BJ (cell line): ENCODE measurements at regions of chr11 and their contacts with region 1.

Region 1: GRCh38 chr11:94623120-94623735 is 56.1 kb downstream of the PIWIL4 start:
- DNase-seq: peak; percentile 23
- H3K4me3 ChIP-seq: no peak overlapping the region
- H3K27me3 ChIP-seq: no peaks in the 10 kb centered on the region
- CTCF ChIP-seq: peak; percentile 86

Region 2: GRCh38 chr11:94100253-94100652 is 523.0 kb before region 1 on chr11:
- CTCF ChIA-PET with region 1: no interaction called
- POLR2A ChIA-PET with region 1: no interaction called
- DNase-seq: no peak
- H3K4me3 ChIP-seq: no peak overlapping the region
- H3K27me3 ChIP-seq: no peaks in the 10 kb centered on the region
- CTCF ChIP-seq: no peak

Region 3: DNA sequence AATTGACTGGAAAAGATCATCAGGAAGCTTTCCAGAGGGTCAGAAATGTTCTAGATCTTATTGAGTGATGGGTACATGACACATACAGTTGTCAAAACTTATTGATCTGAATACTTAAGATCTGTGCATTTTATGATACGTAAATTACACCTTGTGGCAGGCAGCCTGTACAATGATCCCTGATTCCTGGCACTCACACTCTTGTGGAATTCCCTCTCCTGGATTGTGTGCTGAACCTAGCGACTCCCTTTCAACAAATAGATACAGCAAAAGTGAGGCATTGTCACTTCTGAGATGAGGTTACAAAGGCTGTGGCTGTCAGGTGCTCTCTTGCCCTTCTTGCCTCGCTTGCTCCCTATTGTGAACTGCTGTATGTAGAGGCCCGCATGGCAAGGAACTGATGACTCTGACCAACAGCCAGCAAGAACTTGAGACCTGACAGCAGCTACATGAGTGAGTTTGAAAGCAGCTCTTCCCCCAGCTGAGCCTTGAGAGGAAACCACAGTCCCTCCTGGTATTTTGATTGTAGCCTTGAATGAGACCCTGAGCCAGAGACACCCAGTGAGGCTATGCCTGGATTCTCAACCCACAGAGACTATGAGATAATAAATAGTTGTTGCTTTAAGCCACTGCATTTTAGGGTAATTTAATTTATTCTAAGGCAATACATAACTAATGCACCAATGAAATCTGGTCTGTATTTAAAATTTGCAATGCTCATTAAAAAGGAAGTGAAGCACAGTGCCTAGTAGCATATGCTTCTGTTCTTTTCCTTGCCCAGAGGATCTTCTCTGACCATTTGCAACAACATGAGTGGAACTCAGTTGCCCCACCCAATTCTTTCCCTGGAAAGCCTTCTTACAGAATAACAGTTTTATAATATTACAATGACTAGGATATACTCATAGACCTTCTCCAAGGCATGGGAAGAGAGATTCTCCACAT is 379.4 kb before region 1 on chr11:
- CTCF ChIA-PET with region 1: no interaction called
- POLR2A ChIA-PET with region 1: no interaction called
- DNase-seq: no peak
- H3K4me3 ChIP-seq: no peak overlapping the region
- H3K27me3 ChIP-seq: no peaks in the 10 kb centered on the region
- CTCF ChIP-seq: no peak

Region 4: DNA sequence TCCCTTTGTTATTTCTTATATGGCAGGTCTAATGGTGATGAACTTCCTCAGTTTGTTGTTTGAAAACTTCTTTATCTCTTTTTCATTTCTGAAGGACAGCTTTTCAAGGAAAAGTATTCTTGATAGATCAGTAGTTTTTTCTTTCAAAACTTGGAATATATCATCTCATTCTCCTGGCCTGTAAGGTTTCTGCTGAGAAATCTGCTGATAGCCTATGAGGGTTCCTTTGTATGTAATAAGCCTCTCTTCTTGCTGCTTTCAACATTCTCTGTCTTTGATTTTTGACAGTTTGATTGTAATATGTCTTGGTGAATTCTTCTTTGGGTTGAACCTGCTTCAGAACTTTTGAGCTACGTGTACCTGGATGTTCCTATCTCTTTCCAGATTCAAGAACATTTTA is 10.1 kb before region 1 on chr11:
- CTCF ChIA-PET with region 1: interaction called, 31 read pairs
- POLR2A ChIA-PET with region 1: no interaction called
- DNase-seq: no peak
- H3K4me3 ChIP-seq: no peak overlapping the region
- H3K27me3 ChIP-seq: no peaks in the 10 kb centered on the region
- CTCF ChIP-seq: no peak

Region 5: DNA sequence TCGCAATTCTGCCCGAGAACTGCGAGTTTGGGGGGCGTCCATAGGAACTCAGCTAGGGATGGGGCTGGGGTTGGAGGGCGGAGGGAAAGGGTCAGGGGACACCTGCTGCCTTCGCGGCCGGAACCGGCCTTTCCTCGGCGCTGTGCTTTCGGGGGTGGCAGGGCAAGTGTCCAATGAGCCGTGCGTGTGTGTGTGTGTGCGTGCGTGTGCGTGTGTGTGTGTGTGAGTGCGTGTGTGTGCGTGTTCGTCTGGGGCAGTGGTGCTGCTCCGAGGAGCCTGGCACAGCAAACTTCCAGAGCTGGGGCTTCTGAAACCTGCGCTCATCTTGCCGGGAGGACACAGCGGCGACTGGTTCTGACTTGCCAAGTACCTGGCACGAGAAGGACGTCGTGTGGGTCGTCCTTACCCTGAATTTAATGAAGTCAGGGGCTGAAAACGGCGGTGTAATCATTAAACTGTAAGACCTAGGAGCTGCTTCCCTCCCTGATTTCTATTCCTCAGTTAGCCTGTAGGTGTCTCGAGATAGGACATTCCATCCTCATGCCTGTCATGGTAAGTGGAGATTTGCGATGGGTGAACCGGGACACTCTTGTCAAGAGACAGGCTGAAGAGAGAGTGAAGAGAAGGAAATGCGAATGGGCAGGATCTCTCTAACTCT is 117.9 kb after region 1 on chr11:
- CTCF ChIA-PET with region 1: interaction called, 36 read pairs
- POLR2A ChIA-PET with region 1: interaction called, 3 read pairs
- DNase-seq: no peak
- H3K4me3 ChIP-seq: peak overlapping the region; percentile 55
- H3K27me3 ChIP-seq: no peaks in the 10 kb centered on the region
- CTCF ChIP-seq: peak; percentile 68

Region 6: GRCh38 chr11:94767761-94768601 is 144.8 kb after region 1 on chr11 and contains the start of gene AMOTL1:
- CTCF ChIA-PET with region 1: interaction called, 62 read pairs
- POLR2A ChIA-PET with region 1: no interaction called
- DNase-seq: no peak
- H3K4me3 ChIP-seq: peak within 1 kb of the TSS; percentile 56
- H3K27me3 ChIP-seq: no peaks in the 10 kb centered on the region
- CTCF ChIP-seq: 0 out of 2 replicates have a peak, but pooled peaks have one; percentile 7
- polyA plus RNA-seq, gene AMOTL1: 21.5 and 25.5 TPM in 2 replicates

Region 7: DNA sequence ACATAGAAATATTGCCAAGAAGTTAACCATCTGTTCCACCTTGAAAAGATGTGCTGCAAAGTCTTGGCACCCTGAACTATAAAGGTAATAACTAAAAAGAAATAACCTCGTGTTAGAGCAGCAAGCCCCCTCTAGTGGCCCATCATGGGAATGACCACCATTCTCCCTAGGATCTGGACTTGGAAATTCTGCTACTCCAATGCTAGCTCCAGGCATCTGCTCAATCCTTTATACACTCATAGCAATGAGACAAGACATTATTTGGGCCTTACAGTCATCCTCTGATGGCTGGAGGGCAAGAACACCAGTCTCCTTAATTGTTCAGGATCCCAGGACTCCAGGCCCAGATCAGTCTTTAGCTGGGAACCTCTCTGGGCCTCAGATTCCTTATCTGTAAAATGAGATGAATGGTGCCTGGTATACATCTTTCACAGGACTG is 274.1 kb after region 1 on chr11:
- CTCF ChIA-PET with region 1: interaction called, 76 read pairs
- POLR2A ChIA-PET with region 1: no interaction called
- DNase-seq: no peak
- H3K4me3 ChIP-seq: no peak overlapping the region
- H3K27me3 ChIP-seq: no peaks in the 10 kb centered on the region
- CTCF ChIP-seq: peak; percentile 87

Region 8: GRCh38 chr11:94973099-94973968 is 350.1 kb after region 1 on chr11 and contains the starts of genes CWC15 and KDM4D:
- CTCF ChIA-PET with region 1: interaction called, 32 read pairs
- POLR2A ChIA-PET with region 1: no interaction called
- DNase-seq: peak; percentile 66
- H3K4me3 ChIP-seq: peak within 1 kb of the TSS; percentile 100
- H3K27me3 ChIP-seq: no peaks in the 10 kb centered on the region
- CTCF ChIP-seq: 0 out of 2 replicates have a peak, but pooled peaks have one; percentile 1
- polyA plus RNA-seq, gene CWC15: 24.9 and 54.7 TPM in 2 replicates
- polyA plus RNA-seq, gene KDM4D: 0.97 and 1.1 TPM in 2 replicates